Heart left ventricle (tissue), 16 donors: ENCODE measurements at regions of chr16 and their contacts with region 1.

Region 1: GRCh38 chr16:84726079-84726668 is 26.4 kb downstream of the USP10 start:
- DNase-seq: peak; percentile 85 to 93 (median 88)
- ATAC-seq: peak; percentile 56 to 83 (median 80)
- H3K4me3 ChIP-seq: peak overlapping the region in 6 of 12 donors; percentile 6 to 35 (median 12)
- H3K27ac ChIP-seq: peak overlapping the region in 3 of 12 donors; percentile 11 to 76 (median 56)
- H3K4me1 ChIP-seq: peaks cover 6 to 88% (median 52%) of the 10 kb centered on the region in 12 donors
- H3K27me3 ChIP-seq: no peaks in the 10 kb centered on the region
- CTCF ChIP-seq: peak; percentile 86 to 99 (median 95)
- POLR2A ChIP-seq: no peak

Region 2: DNA sequence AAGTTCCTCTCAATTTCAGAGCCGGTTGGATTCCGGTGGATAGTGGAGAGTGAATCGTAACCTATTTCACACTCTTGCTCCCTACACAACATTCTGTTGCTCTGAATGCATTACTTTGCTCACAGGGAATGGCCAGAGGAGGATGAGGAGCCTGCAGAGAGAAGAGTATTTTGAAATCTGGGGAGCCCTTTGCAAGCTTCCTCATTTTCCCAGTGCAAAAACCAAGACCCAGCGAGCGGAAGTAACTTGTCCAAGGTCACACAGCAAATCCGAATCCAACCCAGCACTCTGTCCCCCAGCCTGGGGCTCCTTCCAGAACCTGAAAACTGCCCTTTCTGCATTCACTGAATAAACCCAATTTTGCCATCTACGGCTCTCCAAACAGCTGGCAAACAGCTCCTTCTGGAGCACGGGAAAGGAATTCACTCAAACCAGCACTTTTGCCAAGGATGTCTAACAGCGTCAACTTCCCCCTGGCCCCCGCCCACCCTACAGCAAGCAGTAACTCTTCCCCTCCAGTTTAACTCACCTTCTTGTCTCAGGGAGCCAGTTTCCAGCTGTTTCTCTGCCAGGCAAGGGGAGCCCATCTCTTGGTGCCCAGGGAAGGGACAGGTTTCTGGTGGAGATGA is 486.9 kb before region 1 on chr16:
- intact Hi-C with region 1: no loop called
- DNase-seq: no peak
- ATAC-seq: no peak
- H3K4me3 ChIP-seq: no peak overlapping the region
- H3K27ac ChIP-seq: no peak overlapping the region
- H3K4me1 ChIP-seq: peaks cover 0 to 9% (median 0%) of the 10 kb centered on the region in 12 donors
- H3K27me3 ChIP-seq: peaks cover 0 to 47% (median 6%) of the 10 kb centered on the region in 9 donors
- CTCF ChIP-seq: no peak
- POLR2A ChIP-seq: no peak

Region 3: DNA sequence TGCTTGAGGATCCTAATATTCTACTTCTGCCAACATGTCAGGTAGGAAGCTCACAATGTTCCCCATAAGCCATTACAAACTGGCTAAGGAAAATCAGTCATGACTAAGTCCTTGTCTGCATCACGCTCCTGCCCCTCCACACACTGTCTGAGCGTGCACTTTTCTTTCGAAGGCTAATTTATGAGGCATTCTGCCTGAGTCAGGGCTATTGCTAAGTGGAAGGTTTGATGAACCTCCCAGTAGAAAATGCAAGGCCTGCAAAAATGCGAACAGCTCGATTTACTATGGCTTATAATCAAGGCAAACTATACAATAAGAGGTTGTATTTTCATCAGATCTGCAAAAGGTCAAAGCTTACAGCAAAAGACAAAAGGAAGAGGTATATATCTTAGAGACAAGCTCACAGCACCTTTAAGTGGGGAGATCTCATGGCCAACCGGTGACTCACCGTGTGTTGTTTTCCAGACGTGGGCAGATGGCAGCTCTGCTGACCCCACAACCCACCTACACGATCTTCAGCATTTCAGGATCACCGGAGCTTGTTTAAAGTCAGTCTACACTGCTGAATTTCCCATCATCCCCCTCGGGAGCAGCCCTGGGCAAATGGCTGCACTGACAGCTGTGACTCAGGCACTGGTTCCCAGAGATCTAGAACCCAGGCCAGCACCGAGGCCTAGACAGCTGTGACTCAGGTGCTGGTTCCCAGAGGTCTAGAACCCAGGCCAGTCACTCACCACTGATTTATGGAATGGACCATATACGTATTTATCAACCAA is 247.8 kb before region 1 on chr16:
- intact Hi-C with region 1: no loop called
- DNase-seq: peak in 1 of 5 donors; percentile 8
- ATAC-seq: no peak
- H3K4me3 ChIP-seq: no peak overlapping the region
- H3K27ac ChIP-seq: no peak overlapping the region
- H3K4me1 ChIP-seq: no peaks in the 10 kb centered on the region
- H3K27me3 ChIP-seq: no peaks in the 10 kb centered on the region
- CTCF ChIP-seq: no peak
- POLR2A ChIP-seq: no peak

Region 4: DNA sequence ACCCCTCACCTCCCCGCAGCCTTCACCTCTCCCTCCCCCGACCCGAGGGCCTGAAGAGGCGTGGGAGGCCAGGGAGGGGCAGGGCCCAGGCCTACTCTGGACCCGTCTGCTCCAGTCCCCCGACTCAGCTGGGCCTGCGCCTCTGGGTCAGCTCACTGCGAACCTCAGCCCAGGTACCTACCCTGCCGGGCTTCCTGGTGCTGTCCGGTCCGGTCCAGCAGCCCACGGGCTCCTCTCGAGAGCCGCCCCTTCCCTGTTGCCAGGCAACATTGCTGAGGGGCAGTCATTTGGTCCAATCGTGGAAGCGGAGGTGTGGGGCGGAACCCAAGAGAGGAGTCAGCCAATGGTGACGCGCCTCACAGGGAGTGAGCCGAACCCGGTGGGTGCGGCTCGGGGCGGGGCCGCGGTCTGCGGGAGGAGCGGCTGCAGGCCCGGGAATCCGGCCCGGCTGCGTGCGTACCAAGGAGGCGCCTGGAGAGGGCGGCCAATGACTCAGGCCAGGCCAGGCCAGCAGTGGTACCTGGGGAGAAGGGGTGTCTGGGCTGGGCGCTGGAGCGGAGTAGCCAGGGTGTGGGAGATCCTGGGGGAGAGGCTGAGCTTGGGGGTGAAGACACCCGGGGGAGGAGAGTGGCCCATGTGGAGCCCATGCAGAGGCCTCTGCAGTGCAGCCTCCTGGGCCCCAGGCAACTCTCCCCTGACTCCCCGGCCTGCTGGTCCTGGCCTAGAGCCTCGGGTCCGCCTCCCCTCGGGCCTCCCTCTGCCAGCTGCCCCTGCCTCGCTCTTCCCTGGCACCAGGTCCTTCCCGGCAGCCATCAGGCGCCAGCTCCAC is 221.5 kb before region 1 on chr16 and contains the start of gene MEAK7:
- intact Hi-C with region 1: loop called in 1 of 10 experiments (anchors 5 kb)
- DNase-seq: peak; percentile 99
- ATAC-seq: peak; percentile 97 to 99 (median 98)
- H3K4me3 ChIP-seq: peak within 1 kb of the TSS; percentile 24 to 98 (median 80)
- H3K27ac ChIP-seq: peak within 1 kb of the TSS in 11 of 12 donors; percentile 36 to 91 (median 82)
- H3K4me1 ChIP-seq: peaks cover 3 to 32% (median 18%) of the 10 kb centered on the region in 12 donors
- H3K27me3 ChIP-seq: no peaks in the 10 kb centered on the region
- CTCF ChIP-seq: peak in 2 of 12 donors; percentile 23 to 24
- POLR2A ChIP-seq: peak; percentile 59 to 76
- total RNA-seq, gene MEAK7: 4.0 to 13.2 (median 5.5) TPM

Region 5: GRCh38 chr16:84511180-84511824 is 214.9 kb before region 1 on chr16:
- intact Hi-C with region 1: loop called (anchors 2 to 5 kb)
- DNase-seq: peak; percentile 74 to 90 (median 82)
- ATAC-seq: peak; percentile 62 to 87 (median 82)
- H3K4me3 ChIP-seq: no peak overlapping the region
- H3K27ac ChIP-seq: no peak overlapping the region
- H3K4me1 ChIP-seq: peaks cover 0 to 42% (median 5%) of the 10 kb centered on the region in 12 donors
- H3K27me3 ChIP-seq: no peaks in the 10 kb centered on the region
- CTCF ChIP-seq: peak; percentile 94 to 99 (median 98)
- POLR2A ChIP-seq: peak in 1 of 2 donors; percentile 15

Region 6: GRCh38 chr16:84625556-84625955 is 100.6 kb before region 1 on chr16:
- intact Hi-C with region 1: loop called in 8 of 10 experiments (anchors 1 to 5 kb)
- DNase-seq: no peak
- ATAC-seq: no peak
- H3K4me3 ChIP-seq: no peak overlapping the region
- H3K27ac ChIP-seq: no peak overlapping the region
- H3K4me1 ChIP-seq: peaks cover 0 to 8% (median 0%) of the 10 kb centered on the region in 12 donors
- H3K27me3 ChIP-seq: no peaks in the 10 kb centered on the region
- CTCF ChIP-seq: no peak
- POLR2A ChIP-seq: no peak

Region 7: GRCh38 chr16:84672276-84673202 is 53.6 kb before region 1 on chr16:
- intact Hi-C with region 1: loop called (anchors 1 to 2 kb)
- DNase-seq: peak; percentile 71 to 91 (median 80)
- ATAC-seq: peak; percentile 70 to 90 (median 86)
- H3K4me3 ChIP-seq: no peak overlapping the region
- H3K27ac ChIP-seq: no peak overlapping the region
- H3K4me1 ChIP-seq: peaks cover 0 to 5% (median 0%) of the 10 kb centered on the region in 12 donors
- H3K27me3 ChIP-seq: no peaks in the 10 kb centered on the region
- CTCF ChIP-seq: peak in 11 of 12 donors; percentile 84 to 96 (median 91)
- POLR2A ChIP-seq: no peak